Mammary epithelial cell (primary cell): ENCODE measurements at regions of chr7 and their contacts with region 1.

Region 1: GRCh38 chr7:130777426-130777825 is 43.4 kb upstream of the KLF14 start:
- DNase-seq: no peak
- H3K4me3 ChIP-seq: no peak overlapping the region
- H3K27ac ChIP-seq: no peak overlapping the region
- H3K4me1 ChIP-seq: no peaks in the 10 kb centered on the region
- H3K27me3 ChIP-seq: peaks cover 10% of the 10 kb centered on the region
- CTCF ChIP-seq: no peak

Region 2: DNA sequence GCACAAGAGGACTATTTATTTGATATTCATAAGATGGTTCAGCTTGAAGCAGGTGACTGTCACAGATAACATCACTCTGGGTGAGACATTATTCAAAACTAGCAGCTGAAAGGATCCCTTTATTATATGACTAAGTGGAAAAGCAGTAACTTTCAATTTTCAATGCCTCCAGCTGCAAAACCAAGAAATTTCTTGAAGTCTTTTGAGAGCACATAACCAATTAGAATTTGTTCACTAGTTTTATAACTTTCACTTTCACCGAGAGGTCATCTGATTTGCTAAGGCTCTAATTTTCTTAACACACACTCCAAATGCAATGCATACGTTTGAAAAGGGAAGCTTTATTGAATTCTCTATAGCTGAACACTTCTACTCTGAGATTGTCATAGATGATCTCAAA is 45.2 kb after region 1 on chr7:
- CTCF ChIA-PET with region 1: no interaction called
- dilution Hi-C with region 1: loop called (anchors 5 kb)
- in situ Hi-C with region 1: no loop called
- intact Hi-C with region 1: no loop called
- DNase-seq: peak; percentile 60
- H3K4me3 ChIP-seq: no peak overlapping the region
- H3K27ac ChIP-seq: no peak overlapping the region
- H3K4me1 ChIP-seq: no peaks in the 10 kb centered on the region
- H3K27me3 ChIP-seq: no peaks in the 10 kb centered on the region
- CTCF ChIP-seq: no peak